ENCODE measurements at regions of chr5 and their contacts with region 1.

Region 1: GRCh38 chr5:59591162-59591561 is 302.4 kb downstream of the PDE4D start:
- DNase-seq: no peak
- H3K4me3 Mint-ChIP-seq: peak overlapping the region; percentile 30
- H3K27ac Mint-ChIP-seq: no peak overlapping the region
- H3K4me1 Mint-ChIP-seq: peaks cover 55% of the 10 kb centered on the region
- H3K27me3 Mint-ChIP-seq: peaks cover 13% of the 10 kb centered on the region

Region 2: DNA sequence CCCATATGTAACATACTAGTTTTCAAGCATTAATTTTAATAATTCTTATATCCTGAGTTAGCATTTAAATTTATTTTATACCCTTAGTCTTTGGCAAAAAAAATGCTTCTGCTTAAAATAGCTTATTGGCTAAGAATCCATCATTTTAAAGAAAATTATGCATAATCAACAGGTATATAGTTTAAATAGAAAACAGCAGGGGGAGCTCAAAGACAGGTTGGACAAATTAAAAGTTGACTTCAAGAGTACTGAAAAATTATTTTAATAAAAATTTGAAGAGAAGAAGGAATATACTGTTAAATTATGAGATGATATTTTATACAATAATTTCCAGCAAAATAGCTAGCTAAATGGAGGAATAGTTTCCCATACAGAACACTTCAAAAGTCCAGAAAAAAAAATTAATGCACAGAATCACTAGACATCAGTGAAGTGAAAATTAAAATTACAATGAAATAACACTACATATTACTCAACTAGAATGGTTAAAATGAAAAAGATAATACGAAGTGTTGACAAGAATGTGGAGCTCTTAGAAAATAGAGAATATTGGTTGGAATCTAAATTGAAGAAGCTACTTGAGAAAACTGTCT is 84.8 kb before region 1 on chr5:
- intact Hi-C with region 1: loop called (anchors 5 kb)
- DNase-seq: no peak
- H3K4me3 Mint-ChIP-seq: no peak overlapping the region
- H3K27ac Mint-ChIP-seq: no peak overlapping the region
- H3K4me1 Mint-ChIP-seq: peaks cover 9% of the 10 kb centered on the region
- H3K27me3 Mint-ChIP-seq: peaks cover 12% of the 10 kb centered on the region

Region 3: GRCh38 chr5:59608745-59609144 is 17.6 kb after region 1 on chr5:
- intact Hi-C with region 1: loop called (anchors 1 kb)
- DNase-seq: no peak
- H3K4me3 Mint-ChIP-seq: peak overlapping the region; percentile 41
- H3K27ac Mint-ChIP-seq: peak overlapping the region; percentile 77
- H3K4me1 Mint-ChIP-seq: peaks cover 43% of the 10 kb centered on the region
- H3K27me3 Mint-ChIP-seq: no peaks in the 10 kb centered on the region

Region 4: DNA sequence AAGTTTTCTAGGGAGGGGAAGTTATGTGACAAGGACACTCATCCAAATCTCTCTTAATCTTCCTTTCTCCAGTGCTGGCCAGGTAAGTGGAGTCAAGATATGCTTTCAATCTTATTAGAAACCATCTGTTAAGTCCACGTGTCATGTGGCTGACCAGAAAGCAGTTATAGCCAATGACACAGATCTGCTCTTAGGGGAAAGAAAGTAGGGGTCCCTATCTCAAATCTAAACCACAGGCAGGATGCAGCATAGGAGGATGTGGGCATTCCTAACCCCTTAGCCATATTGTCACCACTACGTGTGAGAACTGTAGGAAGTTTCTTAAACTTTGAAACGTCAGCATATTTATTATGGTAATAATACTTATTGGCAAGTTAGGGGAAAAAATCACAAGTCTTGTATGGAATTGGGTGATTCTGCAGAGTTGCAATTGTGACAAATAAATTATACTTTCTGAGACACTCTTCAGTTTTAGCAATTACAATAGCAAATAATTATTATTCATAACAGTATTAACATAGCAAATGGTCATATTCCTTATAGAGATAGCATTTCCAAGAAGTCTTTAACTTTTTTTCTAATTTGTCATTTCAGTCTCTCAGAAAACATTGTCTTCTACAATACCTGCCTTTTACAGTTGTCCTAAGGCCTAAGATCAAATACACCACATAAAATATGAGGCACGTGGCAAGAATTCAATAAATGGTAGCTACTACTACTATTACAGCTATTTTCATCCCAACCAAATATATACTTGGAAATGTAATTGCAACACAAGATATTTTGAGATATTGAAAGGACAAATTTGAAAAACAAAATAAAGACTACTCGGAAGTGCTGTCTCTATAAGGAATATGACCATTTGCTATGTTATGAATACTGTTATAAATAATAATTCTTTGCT is 65.4 kb after region 1 on chr5:
- intact Hi-C with region 1: loop called (anchors 5 kb)
- DNase-seq: no peak
- H3K4me3 Mint-ChIP-seq: no peak overlapping the region
- H3K27ac Mint-ChIP-seq: no peak overlapping the region
- H3K4me1 Mint-ChIP-seq: peaks cover 32% of the 10 kb centered on the region
- H3K27me3 Mint-ChIP-seq: peaks cover 2% of the 10 kb centered on the region

Region 5: DNA sequence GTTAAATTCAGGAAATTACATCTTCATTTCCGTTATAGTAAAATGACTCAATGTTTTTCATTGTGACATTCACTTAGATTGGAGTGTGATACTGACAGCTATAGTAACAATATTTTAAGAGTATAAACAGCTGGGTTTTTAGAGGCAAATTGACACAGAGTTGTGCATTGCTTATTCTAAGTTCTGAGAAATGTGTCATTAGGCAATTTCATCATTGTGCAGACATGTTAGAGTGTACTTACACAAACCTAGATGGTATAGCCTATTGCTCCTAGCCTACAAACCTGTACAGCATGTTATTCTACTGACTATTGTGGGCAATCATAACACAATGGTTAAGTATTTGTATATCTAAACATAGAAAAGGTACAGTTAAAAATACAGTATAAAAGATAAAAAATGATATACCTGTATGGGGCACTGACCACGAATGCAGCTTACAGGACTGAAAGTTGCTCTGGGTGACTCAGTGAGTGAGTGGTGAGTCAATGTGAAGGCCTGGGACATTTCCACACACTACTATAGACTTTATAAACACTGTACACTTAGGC is 169.7 kb after region 1 on chr5:
- intact Hi-C with region 1: loop called (anchors 2 kb)
- DNase-seq: no peak
- H3K4me3 Mint-ChIP-seq: no peak overlapping the region
- H3K27ac Mint-ChIP-seq: no peak overlapping the region
- H3K4me1 Mint-ChIP-seq: peaks cover 5% of the 10 kb centered on the region
- H3K27me3 Mint-ChIP-seq: peaks cover 3% of the 10 kb centered on the region

Measured in activated T-helper 1 cell treated with anti-CD3 and anti-CD28 coated beads, Interleukin-12 subunit alpha, Interleukin-12 subunit beta, Interleukin-2, Interleukin-4 antibody, amounts not matched to agents 30 ng/mL and 10 ng/mL and 1 ng/mL, durations not matched to agents 14 hours and 24 hours and 36 hours (primary cell).